ENCODE measurements at regions of chr3 and their contacts with region 1.

Region 1: DNA sequence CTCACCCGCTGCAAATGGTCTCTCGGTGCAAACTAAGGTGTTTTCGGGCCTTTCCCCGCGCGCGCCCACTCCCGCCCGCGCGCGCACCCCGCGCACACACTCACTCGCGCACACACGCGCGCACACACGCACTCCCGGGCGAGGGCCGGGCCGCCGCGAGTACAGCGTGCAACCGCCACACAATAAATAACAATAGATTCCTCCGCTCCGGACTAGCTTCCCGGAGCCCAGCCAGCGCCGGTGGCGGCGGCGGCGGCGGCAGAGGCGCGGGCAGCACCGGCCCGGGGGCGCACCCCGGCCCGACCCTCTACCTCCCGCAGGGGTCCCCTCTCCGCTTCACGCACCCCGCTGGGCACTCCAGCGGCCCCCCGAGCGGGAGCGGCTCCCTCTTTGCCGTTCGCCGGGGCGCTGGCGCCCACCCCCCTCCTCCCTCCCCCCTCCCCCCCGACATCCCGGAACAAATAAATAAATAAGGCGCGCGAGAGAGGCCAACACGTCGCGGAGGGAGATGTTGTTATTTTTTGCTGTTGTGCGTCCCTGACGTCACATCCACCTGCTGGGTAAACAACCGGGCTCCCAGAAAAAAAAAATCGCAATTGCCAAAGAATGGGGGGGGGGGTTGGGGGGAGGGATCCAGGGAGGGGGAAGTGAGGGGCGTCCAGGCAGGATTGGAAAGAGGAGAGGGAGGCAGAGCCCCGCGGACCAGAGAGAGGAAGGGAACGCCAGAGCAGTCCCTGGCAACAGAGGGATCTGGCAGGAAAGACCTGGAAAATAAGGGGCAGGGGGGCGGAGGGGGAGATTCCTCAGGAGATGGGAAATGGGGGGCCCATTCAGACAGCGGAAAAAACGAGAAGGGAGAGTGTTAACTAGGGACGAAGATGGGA is at the start of gene FOXP1:
- DNase-seq: peak; percentile 66
- ATAC-seq: peak; percentile 53
- H3K4me3 ChIP-seq: peak within 1 kb of the TSS; percentile 91 to 97 (median 95)
- H3K27ac ChIP-seq: peak within 1 kb of the TSS; percentile 97
- H3K4me1 ChIP-seq: peaks cover 40% of the 10 kb centered on the region
- H3K27me3 ChIP-seq: no peaks in the 10 kb centered on the region
- CTCF ChIP-seq: no peak
- EP300 ChIP-seq: no peak
- POLR2A ChIP-seq: peak in 1 of 2 experiments; percentile 44; a peak in 1 of 4 replicates
- RAD21 ChIP-seq: no peak
- total RNA-seq, gene FOXP1: 43.3 and 59.0 TPM in 2 replicates

Region 2: DNA sequence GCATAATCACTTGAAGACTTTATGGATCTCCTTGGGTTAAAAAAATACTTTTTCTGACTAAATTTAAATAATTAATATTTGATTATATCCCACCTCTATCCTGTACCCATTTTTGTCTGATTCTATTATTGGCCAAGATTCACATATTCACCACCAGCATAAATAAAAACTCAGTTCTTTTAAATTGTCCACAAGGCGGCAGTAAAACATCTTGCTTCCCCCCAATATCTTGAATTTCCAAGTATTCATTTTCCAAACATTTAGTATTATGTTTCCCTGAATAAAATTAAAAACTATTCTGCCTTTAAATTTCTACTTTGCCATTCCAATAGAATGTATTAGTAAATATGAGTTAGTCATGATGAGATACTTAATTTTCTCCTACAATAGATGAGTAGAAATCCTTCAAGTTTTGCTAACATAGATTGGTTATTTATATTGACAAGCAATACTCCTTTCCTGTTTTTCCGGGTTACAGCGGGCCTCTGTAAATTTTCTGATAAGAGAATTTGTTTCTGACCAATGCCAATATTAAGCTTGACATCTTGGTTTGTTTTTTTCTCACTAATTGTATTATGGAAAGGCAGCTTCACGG is 1052.6 kb before region 1 on chr3:
- CTCF ChIA-PET with region 1: no interaction called
- POLR2A ChIA-PET with region 1: no interaction called
- in situ Hi-C with region 1: no loop called
- intact Hi-C with region 1: loop called (anchors 1 kb)
- DNase-seq: peak; percentile 4
- ATAC-seq: no peak
- H3K4me3 ChIP-seq: no peak overlapping the region
- H3K27ac ChIP-seq: no peak overlapping the region
- H3K4me1 ChIP-seq: no peaks in the 10 kb centered on the region
- H3K27me3 ChIP-seq: peaks cover 0 to 1% of the 10 kb centered on the region in 2 experiments; a peak in 1 of 5 replicates
- CTCF ChIP-seq: peak; percentile 44
- EP300 ChIP-seq: no peak
- POLR2A ChIP-seq: no peak
- RAD21 ChIP-seq: no peak

Region 3: GRCh38 chr3:71050538-71051258 is 533.1 kb before region 1 on chr3:
- CTCF ChIA-PET with region 1: no interaction called
- POLR2A ChIA-PET with region 1: interaction called, 3 read pairs
- in situ Hi-C with region 1: loop called (anchors 10 kb)
- intact Hi-C with region 1: no loop called
- DNase-seq: peak; percentile 61
- ATAC-seq: peak; percentile 8; the same call in 1 of the 3 replicates
- H3K4me3 ChIP-seq: no peak overlapping the region
- H3K27ac ChIP-seq: peak overlapping the region; percentile 65
- H3K4me1 ChIP-seq: peaks cover 73% of the 10 kb centered on the region
- H3K27me3 ChIP-seq: no peaks in the 10 kb centered on the region
- CTCF ChIP-seq: no peak
- EP300 ChIP-seq: peak in 1 of 2 experiments; percentile 30; a peak in 1 of 4 replicates
- POLR2A ChIP-seq: no peak
- RAD21 ChIP-seq: no peak

Region 4: DNA sequence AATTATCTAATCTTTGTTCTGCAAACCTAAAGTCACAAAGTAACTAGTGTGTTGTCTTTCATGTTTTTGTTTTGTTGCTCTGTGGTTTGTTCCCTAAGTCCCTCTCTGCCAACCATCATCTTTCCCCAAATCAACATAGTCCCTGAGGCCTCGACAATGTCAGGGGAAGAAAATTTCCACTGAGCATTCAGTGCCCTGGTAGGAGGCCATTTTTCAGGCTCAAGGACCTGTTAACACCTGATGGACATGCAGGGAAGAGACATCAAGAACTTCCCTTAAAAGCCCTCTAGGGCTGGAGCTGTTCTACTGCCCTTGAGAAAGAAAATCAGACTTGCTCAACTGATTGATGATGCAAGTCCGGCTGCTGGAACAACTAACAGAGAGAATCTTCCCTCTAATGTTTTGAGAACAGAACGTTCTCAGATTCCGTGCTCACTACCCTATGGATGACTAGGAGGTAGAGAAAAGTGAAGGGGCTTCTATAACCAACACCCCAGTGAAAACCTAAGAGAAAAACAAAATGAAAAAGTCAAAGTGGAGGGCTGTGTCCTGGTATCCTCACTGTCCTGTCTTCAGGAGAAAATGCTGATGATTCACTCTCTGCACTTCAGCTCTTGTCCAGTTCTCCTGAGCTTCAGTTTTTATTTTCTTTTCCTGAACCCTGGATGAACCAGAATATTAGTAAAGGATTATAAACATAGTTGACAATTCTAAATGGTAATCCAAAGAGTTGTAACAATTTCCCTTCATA is 373.4 kb before region 1 on chr3:
- CTCF ChIA-PET with region 1: no interaction called
- POLR2A ChIA-PET with region 1: interaction called, 17 read pairs
- in situ Hi-C with region 1: no loop called
- intact Hi-C with region 1: loop called (anchors 2 kb)
- DNase-seq: peak; percentile 87
- ATAC-seq: peak; percentile 47
- H3K4me3 ChIP-seq: peak overlapping the region in 1 of 3 experiments; percentile 17; a peak in 1 of 6 replicates
- H3K27ac ChIP-seq: peak overlapping the region; percentile 99
- H3K4me1 ChIP-seq: peaks cover 69% of the 10 kb centered on the region
- H3K27me3 ChIP-seq: no peaks in the 10 kb centered on the region
- CTCF ChIP-seq: no peak
- EP300 ChIP-seq: peak in 1 of 2 experiments; percentile 66; a peak in 2 of 4 replicates
- POLR2A ChIP-seq: no peak
- RAD21 ChIP-seq: peak; percentile 19; the same call in 1 of the 2 replicates

Region 5: DNA sequence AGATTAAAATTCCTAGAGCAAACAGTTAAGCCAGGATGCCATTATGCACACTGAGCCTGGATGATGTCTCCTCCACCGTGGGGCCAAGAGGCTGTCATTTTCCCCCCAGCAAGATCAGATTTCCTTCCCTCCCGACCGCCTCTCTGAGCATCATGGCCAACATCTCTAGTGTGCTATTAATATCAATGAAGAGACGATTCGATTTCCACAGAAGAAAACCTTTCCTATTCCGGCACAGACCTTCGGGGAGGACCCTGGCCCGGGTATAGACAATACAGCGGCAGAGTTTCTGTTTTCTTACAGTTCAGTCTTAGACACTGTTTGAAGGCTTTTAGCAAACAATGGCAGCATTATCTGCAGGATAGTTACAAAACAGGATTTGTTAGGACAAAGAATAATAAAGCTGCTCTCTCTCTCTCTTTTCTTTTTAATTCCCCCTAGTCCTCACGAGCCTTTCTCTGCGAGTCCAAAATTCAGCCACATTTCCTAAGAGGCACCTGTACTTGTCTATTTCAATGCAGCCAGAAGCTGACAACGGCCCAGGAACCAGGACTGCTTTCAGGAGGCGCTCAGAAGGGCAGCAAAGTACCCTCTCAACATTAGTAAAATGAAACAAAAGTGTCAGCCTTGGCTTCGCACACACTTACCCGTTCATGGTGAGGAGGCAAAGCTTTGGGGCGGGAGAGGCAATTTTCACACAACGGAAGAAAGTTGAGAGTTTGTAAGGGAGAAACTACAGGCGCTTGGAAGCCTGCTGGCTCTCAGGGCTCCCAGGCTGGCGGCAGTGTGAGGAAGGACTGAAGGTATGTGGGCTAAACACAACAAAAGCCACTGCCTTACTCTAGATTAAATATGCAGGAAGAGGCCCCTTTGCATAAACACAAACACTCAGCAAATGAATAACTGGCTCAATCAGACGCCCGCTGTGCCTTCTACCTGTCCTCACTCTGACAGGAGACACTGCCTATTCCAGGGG is 278.3 kb before region 1 on chr3:
- CTCF ChIA-PET with region 1: no interaction called
- POLR2A ChIA-PET with region 1: no interaction called
- in situ Hi-C with region 1: loop called (anchors 5 kb)
- intact Hi-C with region 1: loop called (anchors 5 kb)
- DNase-seq: peak; percentile 70
- ATAC-seq: peak; percentile 87
- H3K4me3 ChIP-seq: peak overlapping the region; percentile 66 to 75 (median 74)
- H3K27ac ChIP-seq: peak overlapping the region; percentile 79
- H3K4me1 ChIP-seq: peaks cover 66% of the 10 kb centered on the region
- H3K27me3 ChIP-seq: no peaks in the 10 kb centered on the region
- CTCF ChIP-seq: no peak
- EP300 ChIP-seq: 0 out of 4 replicates have a peak, but pooled peaks of 1 of the 2 experiments have one; percentile 3
- POLR2A ChIP-seq: peak; percentile 21 to 52; a peak in 2 of 4 replicates
- RAD21 ChIP-seq: no peak

Region 6: GRCh38 chr3:71416876-71417275 is 166.9 kb before region 1 on chr3:
- CTCF ChIA-PET with region 1: no interaction called
- POLR2A ChIA-PET with region 1: no interaction called
- in situ Hi-C with region 1: no loop called
- intact Hi-C with region 1: loop called (anchors 5 kb)
- DNase-seq: peak; percentile 34
- ATAC-seq: peak; percentile 82
- H3K4me3 ChIP-seq: no peak overlapping the region
- H3K27ac ChIP-seq: no peak overlapping the region
- H3K4me1 ChIP-seq: peaks cover 34% of the 10 kb centered on the region
- H3K27me3 ChIP-seq: no peaks in the 10 kb centered on the region
- CTCF ChIP-seq: peak; percentile 21; the same call in 1 of the 2 replicates
- EP300 ChIP-seq: no peak
- POLR2A ChIP-seq: no peak
- RAD21 ChIP-seq: no peak

Region 7: GRCh38 chr3:71547249-71548198 is 36.3 kb before region 1 on chr3:
- CTCF ChIA-PET with region 1: no interaction called
- POLR2A ChIA-PET with region 1: interaction called, 16 read pairs
- in situ Hi-C with region 1: no loop called
- intact Hi-C with region 1: loop called (anchors 2 kb)
- DNase-seq: peak; percentile 90
- ATAC-seq: peak; percentile 95
- H3K4me3 ChIP-seq: peak overlapping the region in 1 of 3 experiments; percentile 15; a peak in 1 of 6 replicates
- H3K27ac ChIP-seq: peak overlapping the region; percentile 60
- H3K4me1 ChIP-seq: peaks cover 54% of the 10 kb centered on the region
- H3K27me3 ChIP-seq: no peaks in the 10 kb centered on the region; a peak in 1 of 5 replicates
- CTCF ChIP-seq: no peak
- EP300 ChIP-seq: peak; percentile 71 to 95
- POLR2A ChIP-seq: no peak
- RAD21 ChIP-seq: no peak